ENCODE measurements at regions of chr3 and their contacts with region 1.

Region 1: DNA sequence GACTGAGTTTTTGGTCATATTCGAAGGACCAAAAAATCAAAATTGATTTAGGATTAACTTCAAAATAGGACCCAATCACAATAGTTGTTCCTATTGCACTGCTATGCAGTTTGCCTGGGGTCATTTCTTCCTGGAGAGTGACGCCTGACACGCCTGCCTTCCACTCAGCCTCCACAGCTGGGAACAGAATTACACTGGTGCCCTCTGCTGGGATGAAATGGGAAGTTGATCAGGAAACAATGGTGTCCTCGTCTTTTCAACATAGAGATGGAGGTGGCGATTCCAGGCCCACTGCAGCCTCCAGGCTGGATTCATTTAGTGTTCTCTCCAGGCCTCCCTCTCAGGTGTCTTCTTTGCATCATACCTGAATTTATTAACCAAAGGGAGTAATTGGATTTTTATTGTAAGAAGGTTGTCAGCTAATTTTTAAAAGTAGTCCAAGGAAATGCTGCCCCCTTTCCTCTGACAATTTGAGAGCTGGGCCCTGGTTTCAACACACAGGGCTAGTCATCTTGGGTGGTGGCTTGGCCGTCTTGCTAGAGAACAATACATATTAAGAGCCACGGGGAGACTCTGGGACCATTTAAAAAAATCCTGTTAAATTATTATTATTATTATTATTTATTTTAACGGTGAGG is 69.7 kb downstream of the GAP43 start:
- DNase-seq: peak; percentile 66 to 91 (median 85)
- H3K4me3 ChIP-seq: no peak overlapping the region
- H3K27ac ChIP-seq: no peak overlapping the region
- H3K4me1 ChIP-seq: no peaks in the 10 kb centered on the region
- H3K27me3 ChIP-seq: no peaks in the 10 kb centered on the region
- CTCF ChIP-seq: peak; percentile 80

Region 2: DNA sequence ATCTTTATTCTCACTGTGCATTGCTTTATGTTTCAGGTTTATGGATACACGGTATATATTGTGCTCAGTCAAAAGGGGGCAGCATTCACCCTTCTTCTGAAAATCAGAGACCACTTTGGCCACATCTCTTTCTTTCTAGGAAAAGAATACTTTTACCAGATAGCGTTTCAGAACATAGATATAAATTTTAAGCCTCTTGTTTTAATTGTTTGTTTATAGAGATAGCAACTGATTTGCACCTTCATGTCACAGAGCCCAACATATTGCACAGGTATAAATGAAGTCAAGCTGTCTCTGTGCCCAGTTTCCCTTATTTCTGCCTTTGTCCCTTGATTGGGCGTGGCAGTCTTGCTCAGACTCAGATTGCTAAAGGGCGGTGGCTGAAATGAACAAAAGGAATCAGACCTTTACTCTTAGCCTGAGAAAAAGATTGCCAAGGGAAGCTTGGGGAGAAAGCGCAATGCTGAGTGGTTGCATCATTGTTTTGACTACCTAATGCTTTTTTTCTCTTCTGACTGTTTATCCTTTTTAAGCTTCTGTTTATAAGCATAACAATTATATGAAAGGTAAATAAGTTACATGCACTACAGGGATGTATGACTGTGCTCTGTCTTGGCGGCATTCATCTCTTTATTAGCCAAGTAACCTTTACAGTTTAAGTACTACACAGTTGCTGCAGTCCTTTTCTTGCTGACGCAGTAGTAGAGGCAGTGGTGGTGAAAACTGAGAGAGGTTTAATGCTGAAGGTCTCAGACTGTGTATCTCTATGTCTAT is 475.1 kb before region 1 on chr3:
- intact Hi-C with region 1: loop called (anchors 10 kb)
- DNase-seq: peak in 3 of 5 donors; percentile 37 to 75 (median 70)
- H3K4me3 ChIP-seq: no peak overlapping the region
- H3K27ac ChIP-seq: no peak overlapping the region
- H3K4me1 ChIP-seq: no peaks in the 10 kb centered on the region
- H3K27me3 ChIP-seq: no peaks in the 10 kb centered on the region
- CTCF ChIP-seq: peak; percentile 60

Region 3: GRCh38 chr3:115804722-115805121 is 111.7 kb after region 1 on chr3:
- intact Hi-C with region 1: no loop called
- DNase-seq: no peak
- H3K4me3 ChIP-seq: no peak overlapping the region
- H3K27ac ChIP-seq: no peak overlapping the region
- H3K4me1 ChIP-seq: peaks cover 0 to 4% (median 0%) of the 10 kb centered on the region in 3 donors
- H3K27me3 ChIP-seq: no peaks in the 10 kb centered on the region
- CTCF ChIP-seq: no peak

Region 4: DNA sequence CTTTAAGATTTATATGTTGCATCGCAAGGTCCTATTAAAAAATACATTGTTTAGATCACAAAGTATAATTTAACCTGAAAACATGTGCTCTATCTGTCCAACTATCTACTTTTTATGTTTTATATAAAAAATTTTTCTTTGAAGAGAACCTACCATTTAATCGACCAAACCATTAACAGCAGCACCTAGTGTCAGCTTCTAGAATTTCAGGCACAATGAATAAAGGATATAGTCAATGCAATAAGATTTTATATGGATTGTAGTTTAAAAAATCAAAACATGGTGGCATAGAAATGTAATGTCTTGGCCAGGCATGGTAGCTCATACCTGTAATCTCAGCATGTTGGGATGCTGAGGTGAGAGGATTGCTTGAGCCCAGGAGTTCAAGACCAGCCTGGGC is 244.0 kb after region 1 on chr3:
- intact Hi-C with region 1: no loop called
- DNase-seq: no peak
- H3K4me3 ChIP-seq: no peak overlapping the region
- H3K27ac ChIP-seq: no peak overlapping the region
- H3K4me1 ChIP-seq: no peaks in the 10 kb centered on the region
- H3K27me3 ChIP-seq: no peaks in the 10 kb centered on the region
- CTCF ChIP-seq: no peak